Activated T-helper 1 cell treated with anti-CD3 and anti-CD28 coated beads, Interleukin-12 subunit alpha, Interleukin-12 subunit beta, Interleukin-2, Interleukin-4 antibody, amounts not matched to agents 30 ng/mL and 10 ng/mL and 1 ng/mL, durations not matched to agents 14 hours and 24 hours and 36 hours (primary cell): ENCODE measurements at regions of chr15 and their contacts with region 1.

Region 1: GRCh38 chr15:92881802-92882696 is 18.1 kb upstream of the CHD2 start:
- DNase-seq: peak; percentile 97
- H3K4me3 Mint-ChIP-seq: peak overlapping the region; percentile 87
- H3K27ac Mint-ChIP-seq: peak overlapping the region; percentile 97
- H3K4me1 Mint-ChIP-seq: peaks cover 60% of the 10 kb centered on the region
- H3K27me3 Mint-ChIP-seq: no peaks in the 10 kb centered on the region

Region 2: DNA sequence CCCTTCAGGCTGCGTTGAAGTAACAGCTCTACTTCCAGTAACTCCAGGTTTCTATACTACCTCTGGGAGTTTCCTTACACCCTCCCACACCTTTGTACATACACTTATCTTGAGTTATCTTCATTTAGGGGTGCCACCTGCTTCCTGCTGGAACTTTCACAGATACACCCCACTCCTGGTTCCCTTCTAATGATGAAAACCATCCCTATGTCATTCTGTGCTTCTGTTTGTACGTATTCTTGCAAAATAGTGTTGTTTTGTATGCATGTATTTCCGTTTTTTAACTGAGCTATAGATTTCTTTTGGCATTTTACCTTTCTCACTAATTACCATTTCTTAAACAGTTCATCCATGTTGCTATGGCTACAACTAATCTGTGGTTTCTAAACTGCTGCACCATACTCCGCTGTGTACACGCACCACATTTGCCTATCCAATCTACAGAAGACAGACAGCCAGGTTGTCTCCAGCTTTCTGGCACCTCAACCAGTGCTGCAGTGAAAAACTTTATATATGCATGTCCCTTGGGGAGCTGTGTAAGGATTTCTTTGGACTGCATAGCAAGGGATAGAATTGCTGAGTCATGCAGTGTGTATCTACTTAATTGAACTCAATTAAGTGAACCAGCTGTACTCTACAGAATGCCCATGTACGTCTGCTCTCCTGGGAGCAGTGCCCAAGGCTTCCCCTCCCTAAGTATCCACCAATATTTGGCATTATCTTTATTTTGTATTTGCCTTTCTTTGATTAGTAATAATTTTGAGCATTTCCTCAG is 549.7 kb before region 1 on chr15:
- intact Hi-C with region 1: no loop called
- DNase-seq: no peak
- H3K4me3 Mint-ChIP-seq: no peak overlapping the region
- H3K27ac Mint-ChIP-seq: no peak overlapping the region
- H3K4me1 Mint-ChIP-seq: no peaks in the 10 kb centered on the region
- H3K27me3 Mint-ChIP-seq: no peaks in the 10 kb centered on the region

Region 3: DNA sequence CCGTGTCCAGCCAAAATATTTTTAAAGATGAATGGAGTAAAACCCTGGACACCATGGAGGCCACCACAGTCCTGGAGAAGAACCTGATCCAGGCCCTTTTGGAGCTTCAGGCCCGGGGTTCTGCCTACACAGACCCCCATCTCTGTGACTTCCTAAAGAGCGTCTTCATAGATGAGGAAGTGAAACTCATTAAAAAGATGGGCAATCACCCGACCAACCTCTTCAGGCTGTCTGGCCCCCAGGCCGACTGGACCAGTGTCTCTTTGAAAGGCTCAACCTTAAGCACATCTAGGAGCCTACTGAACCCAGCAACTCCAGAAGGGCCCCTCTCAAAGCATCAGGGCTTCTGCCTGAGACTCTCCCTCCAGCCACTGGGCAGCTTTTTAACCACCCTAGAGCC is 118.6 kb before region 1 on chr15:
- intact Hi-C with region 1: no loop called
- DNase-seq: no peak
- H3K4me3 Mint-ChIP-seq: no peak overlapping the region
- H3K27ac Mint-ChIP-seq: no peak overlapping the region
- H3K4me1 Mint-ChIP-seq: no peaks in the 10 kb centered on the region
- H3K27me3 Mint-ChIP-seq: peaks cover 3% of the 10 kb centered on the region

Region 4: GRCh38 chr15:92808978-92809879 is 72.8 kb before region 1 on chr15:
- intact Hi-C with region 1: loop called (anchors 1 kb)
- DNase-seq: peak; percentile 100
- H3K4me3 Mint-ChIP-seq: peak overlapping the region; percentile 94
- H3K27ac Mint-ChIP-seq: peak overlapping the region; percentile 98
- H3K4me1 Mint-ChIP-seq: peaks cover 60% of the 10 kb centered on the region
- H3K27me3 Mint-ChIP-seq: no peaks in the 10 kb centered on the region

Region 5: DNA sequence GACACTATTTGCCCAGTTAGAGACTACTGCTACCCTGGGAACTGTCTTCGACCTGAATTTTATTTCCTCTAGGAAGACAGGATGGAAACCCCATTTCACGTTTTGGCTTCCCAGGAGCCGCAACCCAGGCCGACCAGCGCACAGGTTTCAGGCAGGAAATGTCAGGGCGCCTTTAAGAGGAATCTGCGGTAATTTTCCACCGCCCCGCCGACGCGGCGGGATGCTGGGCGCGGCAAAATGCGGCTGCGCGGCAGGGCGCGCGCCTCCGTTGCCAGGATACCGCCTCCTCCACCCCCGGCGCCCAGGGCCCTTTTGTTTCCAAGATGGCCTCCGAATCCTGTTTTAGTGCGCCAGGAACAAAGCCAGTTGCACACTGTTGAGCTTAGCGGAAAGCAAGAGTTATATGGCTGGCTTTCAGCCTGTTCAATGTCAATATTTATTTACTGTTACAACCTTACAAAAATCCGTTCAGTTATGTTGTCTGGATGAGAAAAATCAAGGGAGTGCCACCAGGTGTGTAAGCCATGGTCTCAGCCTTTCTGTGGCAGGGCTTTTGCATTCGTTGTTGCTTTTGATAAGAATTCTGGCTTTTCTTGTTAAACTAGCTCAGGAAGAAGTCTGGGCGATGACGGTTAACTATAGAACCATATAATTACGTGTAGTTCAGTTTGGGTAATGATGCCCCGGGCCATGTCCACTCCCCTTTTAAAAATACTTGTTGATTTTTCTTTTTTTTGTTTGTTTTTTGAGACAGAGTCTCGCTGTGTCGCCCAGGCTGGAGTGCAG is 61.6 kb before region 1 on chr15:
- intact Hi-C with region 1: loop called (anchors 1 kb)
- DNase-seq: peak; percentile 86
- H3K4me3 Mint-ChIP-seq: peak overlapping the region; percentile 86
- H3K27ac Mint-ChIP-seq: peak overlapping the region; percentile 96
- H3K4me1 Mint-ChIP-seq: peaks cover 58% of the 10 kb centered on the region
- H3K27me3 Mint-ChIP-seq: no peaks in the 10 kb centered on the region

Region 6: DNA sequence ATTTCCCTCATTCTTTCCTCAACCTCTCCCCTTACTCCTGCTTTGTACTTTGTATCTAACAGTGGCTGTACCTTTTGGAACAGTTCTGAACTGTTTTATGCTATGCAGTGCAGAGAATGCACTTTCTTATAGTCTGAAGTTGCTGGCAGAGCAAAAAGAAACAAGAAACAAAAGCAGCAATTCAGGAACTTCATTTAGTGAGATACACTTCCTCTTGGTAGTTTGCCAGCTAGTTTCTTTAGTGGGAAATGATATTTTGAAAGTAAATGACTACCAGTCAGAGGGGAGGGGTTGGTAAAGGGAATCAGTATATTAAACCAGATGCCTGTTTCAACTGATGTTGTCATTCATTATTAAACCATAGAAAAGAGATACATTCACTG is 36.9 kb before region 1 on chr15:
- intact Hi-C with region 1: loop called (anchors 1 kb)
- DNase-seq: no peak
- H3K4me3 Mint-ChIP-seq: peak overlapping the region; percentile 77
- H3K27ac Mint-ChIP-seq: peak overlapping the region; percentile 96
- H3K4me1 Mint-ChIP-seq: peaks cover 68% of the 10 kb centered on the region
- H3K27me3 Mint-ChIP-seq: no peaks in the 10 kb centered on the region

Region 7: GRCh38 chr15:92903941-92904831 is 22.1 kb after region 1 on chr15:
- intact Hi-C with region 1: loop called (anchors 1 kb)
- DNase-seq: peak; percentile 99
- H3K4me3 Mint-ChIP-seq: peak overlapping the region; percentile 93
- H3K27ac Mint-ChIP-seq: peak overlapping the region; percentile 100
- H3K4me1 Mint-ChIP-seq: peaks cover 67% of the 10 kb centered on the region
- H3K27me3 Mint-ChIP-seq: no peaks in the 10 kb centered on the region